WTC11 (cell line): ENCODE measurements at regions of chr2 and their contacts with region 1.

Region 1: GRCh38 chr2:30711646-30712085 is 95.6 kb downstream of the CAPN13 start:
- DNase-seq: peak; percentile 94
- ATAC-seq: peak; percentile 84
- H3K4me3 Mint-ChIP-seq: no peak overlapping the region
- H3K27ac Mint-ChIP-seq: no peak overlapping the region
- H3K4me1 Mint-ChIP-seq: no peaks in the 10 kb centered on the region
- H3K27me3 Mint-ChIP-seq: no peaks in the 10 kb centered on the region; the same call in 1 of the 2 replicates
- CTCF ChIP-seq: peak; percentile 98

Region 2: DNA sequence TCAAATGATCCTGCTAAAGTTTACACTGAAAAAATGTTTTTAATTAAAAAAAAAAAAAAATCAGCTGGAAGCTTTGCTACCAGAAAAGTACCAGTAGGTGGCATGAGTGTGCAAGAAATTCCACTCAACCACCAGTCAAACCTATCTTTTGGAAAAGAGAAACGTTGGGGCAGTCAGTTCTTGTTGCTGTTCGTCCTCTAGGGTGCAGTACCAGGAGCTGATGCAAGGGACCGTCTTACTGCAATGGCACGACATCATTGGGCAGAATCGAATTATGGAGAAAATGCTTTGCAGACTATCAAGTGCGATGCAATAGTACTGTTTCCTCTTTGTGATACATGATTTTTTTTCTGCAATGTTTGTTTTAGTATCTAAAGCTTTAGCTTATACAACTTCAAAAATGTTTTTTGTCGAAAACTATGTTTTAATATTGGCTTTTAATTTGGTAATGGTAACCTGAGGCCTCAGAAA is 546.6 kb before region 1 on chr2:
- CTCF ChIA-PET with region 1: interaction called, 237 read pairs
- POLR2A ChIA-PET with region 1: interaction called, 3 read pairs
- DNase-seq: peak; percentile 54
- ATAC-seq: peak; percentile 97
- H3K4me3 Mint-ChIP-seq: no peak overlapping the region
- H3K27ac Mint-ChIP-seq: no peak overlapping the region
- H3K4me1 Mint-ChIP-seq: peaks cover 22% of the 10 kb centered on the region
- H3K27me3 Mint-ChIP-seq: no peaks in the 10 kb centered on the region
- CTCF ChIP-seq: peak; percentile 73

Region 3: GRCh38 chr2:30239308-30239985 is 472.2 kb before region 1 on chr2:
- CTCF ChIA-PET with region 1: interaction called, 15 read pairs
- POLR2A ChIA-PET with region 1: no interaction called
- DNase-seq: peak; percentile 84
- ATAC-seq: peak; percentile 94
- H3K4me3 Mint-ChIP-seq: no peak overlapping the region
- H3K27ac Mint-ChIP-seq: 0 out of 2 replicates have a peak overlapping the region, but pooled peaks have one; percentile 18
- H3K4me1 Mint-ChIP-seq: peaks cover 26% of the 10 kb centered on the region
- H3K27me3 Mint-ChIP-seq: no peaks in the 10 kb centered on the region
- CTCF ChIP-seq: peak; percentile 97

Region 4: GRCh38 chr2:30636311-30636710 is 75.4 kb before region 1 on chr2:
- CTCF ChIA-PET with region 1: no interaction called
- POLR2A ChIA-PET with region 1: no interaction called
- DNase-seq: no peak
- ATAC-seq: no peak
- H3K4me3 Mint-ChIP-seq: no peak overlapping the region
- H3K27ac Mint-ChIP-seq: no peak overlapping the region
- H3K4me1 Mint-ChIP-seq: peaks cover 5% of the 10 kb centered on the region; the same call in 1 of the 2 replicates
- H3K27me3 Mint-ChIP-seq: no peaks in the 10 kb centered on the region
- CTCF ChIP-seq: no peak

Region 5: GRCh38 chr2:30691948-30692828 is 19.5 kb before region 1 on chr2:
- CTCF ChIA-PET with region 1: interaction called, 55 read pairs
- POLR2A ChIA-PET with region 1: no interaction called
- DNase-seq: no peak
- ATAC-seq: peak; percentile 54; the same call in 1 of the 2 replicates
- H3K4me3 Mint-ChIP-seq: no peak overlapping the region
- H3K27ac Mint-ChIP-seq: no peak overlapping the region
- H3K4me1 Mint-ChIP-seq: peaks cover 10% of the 10 kb centered on the region
- H3K27me3 Mint-ChIP-seq: no peaks in the 10 kb centered on the region
- CTCF ChIP-seq: no peak

Region 6: DNA sequence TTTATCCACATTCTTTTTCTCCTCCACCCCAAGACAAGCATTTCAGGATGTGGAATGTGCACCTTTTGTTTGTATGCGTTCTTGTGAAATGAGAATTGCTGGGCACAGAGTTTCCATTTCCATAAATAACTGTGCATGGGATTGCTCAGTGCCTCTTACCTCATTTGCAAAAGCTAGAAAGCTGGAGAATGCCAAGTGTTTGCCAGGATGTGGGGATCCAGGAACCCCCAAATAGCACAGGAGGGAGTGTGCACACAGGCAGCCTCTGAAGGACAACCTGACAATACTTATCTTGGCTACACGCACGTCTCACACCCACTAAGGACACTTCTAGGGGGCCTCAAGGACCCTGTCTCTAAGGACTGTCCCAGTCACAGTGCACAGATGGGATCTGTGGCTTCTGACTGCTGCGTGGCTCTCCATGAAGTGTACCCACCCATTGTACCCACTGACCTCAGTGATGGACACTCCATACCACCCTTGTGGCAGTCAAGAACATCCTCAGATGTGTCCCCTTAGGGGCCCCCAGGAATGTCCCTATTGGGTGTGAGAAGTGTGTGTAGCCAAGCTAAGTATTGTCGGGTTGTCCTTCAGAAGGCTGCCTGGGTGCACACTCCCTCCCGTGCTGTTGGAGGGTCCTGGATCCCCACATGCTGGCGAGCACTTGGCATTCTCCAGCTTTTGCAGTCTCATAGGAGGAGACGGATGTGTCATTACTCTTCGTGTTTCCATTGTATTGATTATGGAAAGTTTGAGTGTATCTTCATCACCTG is 57.2 kb after region 1 on chr2:
- CTCF ChIA-PET with region 1: no interaction called
- POLR2A ChIA-PET with region 1: no interaction called
- DNase-seq: no peak
- ATAC-seq: no peak
- H3K4me3 Mint-ChIP-seq: no peak overlapping the region
- H3K27ac Mint-ChIP-seq: no peak overlapping the region
- H3K4me1 Mint-ChIP-seq: peaks cover 11% of the 10 kb centered on the region
- H3K27me3 Mint-ChIP-seq: no peaks in the 10 kb centered on the region; the same call in 1 of the 2 replicates
- CTCF ChIP-seq: no peak

Region 7: DNA sequence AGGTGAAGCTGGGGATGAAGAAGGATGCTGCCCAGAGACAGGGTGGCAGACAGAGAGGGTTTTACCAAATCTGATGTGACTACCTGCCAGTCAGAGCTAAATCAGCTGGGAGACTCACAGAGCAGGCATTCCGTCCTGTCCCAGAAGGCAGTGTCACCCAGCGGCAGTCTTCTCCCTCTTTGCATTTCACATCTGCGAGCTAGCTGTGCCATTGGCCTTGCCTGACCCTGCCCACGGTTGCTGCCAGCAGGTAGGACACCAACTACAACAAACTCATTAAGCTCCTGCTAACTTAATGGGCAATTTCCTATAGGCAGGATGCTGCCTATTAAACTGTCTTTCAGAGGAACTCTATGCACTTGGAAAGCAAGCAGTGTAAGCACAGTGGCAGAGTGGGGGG is 211.9 kb after region 1 on chr2:
- CTCF ChIA-PET with region 1: interaction called, 11 read pairs
- POLR2A ChIA-PET with region 1: no interaction called
- DNase-seq: no peak
- ATAC-seq: peak; percentile 48
- H3K4me3 Mint-ChIP-seq: no peak overlapping the region
- H3K27ac Mint-ChIP-seq: no peak overlapping the region
- H3K4me1 Mint-ChIP-seq: peaks cover 16% of the 10 kb centered on the region
- H3K27me3 Mint-ChIP-seq: no peaks in the 10 kb centered on the region
- CTCF ChIP-seq: no peak

Region 8: DNA sequence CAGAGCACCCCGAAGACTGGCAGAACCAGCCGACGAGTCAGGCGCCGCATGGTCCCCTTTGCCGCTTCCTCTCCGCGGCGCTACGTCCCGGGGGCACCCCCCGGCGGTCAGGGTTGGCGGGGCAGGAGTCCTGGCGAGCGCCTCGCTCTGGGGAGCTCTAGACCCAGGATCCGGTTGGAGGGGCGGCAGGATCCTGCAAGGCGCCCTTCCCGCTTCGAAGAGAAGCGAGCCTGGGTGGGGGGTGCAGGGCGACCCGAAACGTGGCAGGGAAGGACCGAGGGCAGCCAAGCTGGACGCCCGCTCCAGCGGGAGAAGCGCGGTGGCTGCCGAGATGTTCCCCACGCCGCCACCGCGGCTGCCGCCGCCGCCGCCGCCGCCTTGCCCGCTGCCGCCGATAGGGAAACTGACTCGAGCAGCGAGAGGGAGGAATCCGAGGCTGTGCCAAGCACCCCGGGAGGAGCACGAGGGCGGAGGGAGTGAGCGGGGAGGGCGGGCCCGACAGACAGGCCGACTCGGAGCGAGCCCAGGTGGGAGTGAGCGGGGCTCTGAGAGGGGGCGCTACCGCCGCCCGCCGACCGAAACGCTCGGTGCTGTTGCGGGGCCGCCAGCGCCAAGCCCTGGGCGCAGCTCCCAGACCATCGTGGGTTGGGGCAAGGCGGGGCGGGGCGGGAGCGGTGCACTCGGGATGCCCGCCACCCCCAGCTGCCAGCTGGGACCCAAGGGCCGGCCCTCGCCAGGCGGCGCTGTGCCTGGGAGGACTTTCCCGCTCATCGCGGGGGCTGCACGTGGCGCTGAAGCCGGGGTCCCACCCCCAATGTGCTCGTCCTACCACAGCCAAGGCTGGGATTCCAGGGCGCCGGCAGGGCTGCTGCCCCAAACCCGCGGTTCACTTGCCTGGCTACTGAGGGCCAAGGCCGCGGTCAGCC is 426.6 kb after region 1 on chr2 and contains the start of gene GALNT14:
- CTCF ChIA-PET with region 1: interaction called, 19 read pairs
- POLR2A ChIA-PET with region 1: no interaction called
- DNase-seq: peak; percentile 74
- ATAC-seq: peak; percentile 71
- H3K4me3 Mint-ChIP-seq: peak within 1 kb of the TSS; percentile 74
- H3K27ac Mint-ChIP-seq: no peak within 1 kb of the TSS
- H3K4me1 Mint-ChIP-seq: peaks cover 26% of the 10 kb centered on the region
- H3K27me3 Mint-ChIP-seq: peaks cover 78% of the 10 kb centered on the region
- CTCF ChIP-seq: 0 out of 2 replicates have a peak, but pooled peaks have one; percentile 13
- total RNA-seq, gene GALNT14: 6.0 to 6.8 TPM (median 6.3 TPM) in 3 replicates